CD8-positive, alpha-beta T cell (primary cell): ENCODE measurements at regions of chr6 and their contacts with region 1.

Region 1: GRCh38 chr6:21593412-21593926 is at the start of gene SOX4:
- DNase-seq: peak in 8 of 9 experiments; percentile 40 to 90 (median 72)
- ATAC-seq: peak; percentile 71
- H3K4me3 ChIP-seq: peak within 1 kb of the TSS; percentile 62 to 66
- H3K4me3 Mint-ChIP-seq: no peak within 1 kb of the TSS
- H3K27ac ChIP-seq: peak within 1 kb of the TSS; percentile 19 to 33
- H3K27ac Mint-ChIP-seq: peak within 1 kb of the TSS; percentile 78
- H3K4me1 ChIP-seq: peaks cover 28% of the 10 kb centered on the region
- H3K4me1 Mint-ChIP-seq: peaks cover 25% of the 10 kb centered on the region
- H3K27me3 ChIP-seq: peaks cover under 1 to 23% of the 10 kb centered on the region in 2 experiments
- H3K27me3 Mint-ChIP-seq: peaks cover 15% of the 10 kb centered on the region
- CTCF ChIP-seq: no peak
- total RNA-seq, gene SOX4: 20.2 to 20.4 TPM

Region 2: DNA sequence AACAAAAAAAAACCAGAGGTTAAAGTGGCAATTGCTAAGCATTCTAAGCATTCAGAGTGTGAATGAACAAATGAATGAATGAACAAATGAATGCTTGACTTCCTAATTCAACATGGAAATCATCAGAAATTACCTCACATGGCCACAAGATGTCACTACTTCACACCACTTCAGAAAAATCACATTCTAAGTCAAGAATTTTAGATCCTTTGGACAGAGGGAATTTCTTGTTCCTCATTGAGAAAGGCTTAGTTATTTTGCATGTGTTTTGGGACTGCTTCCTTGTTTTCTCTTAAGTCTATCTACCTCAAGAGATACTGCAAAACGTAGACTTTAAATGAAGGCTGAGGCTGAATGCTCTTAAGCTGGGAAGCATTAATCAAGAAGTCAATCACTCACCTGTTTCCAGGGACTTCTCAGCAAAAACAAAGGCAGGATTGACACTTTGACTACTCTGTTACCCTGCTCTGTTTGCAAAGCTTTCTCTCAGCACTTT is 1501.3 kb before region 1 on chr6:
- CTCF ChIA-PET with region 1: interaction called, 4 read pairs
- POLR2A ChIA-PET with region 1: no interaction called
- intact Hi-C with region 1: loop called in 1 of 2 experiments (anchors 5 kb)
- DNase-seq: peak in 2 of 9 experiments; percentile 32 to 48
- ATAC-seq: no peak
- H3K4me3 ChIP-seq: no peak overlapping the region
- H3K4me3 Mint-ChIP-seq: no peak overlapping the region
- H3K27ac ChIP-seq: no peak overlapping the region
- H3K27ac Mint-ChIP-seq: no peak overlapping the region
- H3K4me1 ChIP-seq: no peaks in the 10 kb centered on the region
- H3K4me1 Mint-ChIP-seq: no peaks in the 10 kb centered on the region
- H3K27me3 ChIP-seq: no peaks in the 10 kb centered on the region
- H3K27me3 Mint-ChIP-seq: no peaks in the 10 kb centered on the region
- CTCF ChIP-seq: peak; percentile 45

Region 3: DNA sequence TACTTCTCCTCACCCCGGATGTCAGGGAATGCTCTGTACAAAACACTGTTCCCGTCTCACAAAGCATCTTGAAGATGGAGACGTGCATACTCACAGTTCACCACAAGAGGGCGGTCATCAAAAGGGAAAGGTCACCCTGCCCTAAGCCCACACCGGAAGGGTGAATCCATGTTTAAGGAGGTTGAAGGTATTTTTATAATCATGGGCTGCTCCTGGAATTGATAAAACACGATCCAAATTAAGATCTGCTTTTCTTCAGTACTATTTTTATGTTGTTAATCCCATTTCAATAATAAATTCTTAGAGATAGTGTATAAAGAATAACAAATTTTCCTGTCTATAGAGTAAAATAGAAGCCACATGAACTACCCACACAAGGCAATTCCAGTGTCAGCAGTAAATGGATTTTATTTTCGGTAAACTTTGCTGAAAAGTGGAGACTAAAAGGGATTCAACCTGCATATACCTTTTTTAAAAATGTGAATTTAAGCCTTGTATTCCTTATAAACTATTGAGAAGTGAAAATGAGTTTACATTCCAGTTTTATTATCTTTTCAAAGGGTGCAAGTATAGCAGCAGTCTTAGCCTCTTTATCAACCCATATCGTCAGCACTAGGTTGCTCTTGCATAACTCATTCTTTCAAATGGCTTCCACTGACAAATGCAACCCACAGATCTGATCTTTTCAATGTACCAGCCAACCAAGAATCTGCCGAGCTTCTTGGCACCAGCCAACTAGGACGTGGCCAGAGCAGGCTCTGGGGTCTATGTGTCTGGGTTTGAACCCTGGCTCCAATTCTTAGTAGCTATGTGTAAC is 1301.5 kb before region 1 on chr6:
- CTCF ChIA-PET with region 1: no interaction called
- POLR2A ChIA-PET with region 1: no interaction called
- intact Hi-C with region 1: loop called in 1 of 2 experiments (anchors 10 kb)
- DNase-seq: peak; percentile 34 to 86 (median 77)
- ATAC-seq: peak; percentile 95
- H3K4me3 ChIP-seq: no peak overlapping the region
- H3K4me3 Mint-ChIP-seq: peak overlapping the region; percentile 26
- H3K27ac ChIP-seq: no peak overlapping the region
- H3K27ac Mint-ChIP-seq: peak overlapping the region; percentile 43
- H3K4me1 ChIP-seq: peaks cover 13% of the 10 kb centered on the region
- H3K4me1 Mint-ChIP-seq: peaks cover 24% of the 10 kb centered on the region
- H3K27me3 ChIP-seq: no peaks in the 10 kb centered on the region
- H3K27me3 Mint-ChIP-seq: no peaks in the 10 kb centered on the region
- CTCF ChIP-seq: peak; percentile 95

Region 4: DNA sequence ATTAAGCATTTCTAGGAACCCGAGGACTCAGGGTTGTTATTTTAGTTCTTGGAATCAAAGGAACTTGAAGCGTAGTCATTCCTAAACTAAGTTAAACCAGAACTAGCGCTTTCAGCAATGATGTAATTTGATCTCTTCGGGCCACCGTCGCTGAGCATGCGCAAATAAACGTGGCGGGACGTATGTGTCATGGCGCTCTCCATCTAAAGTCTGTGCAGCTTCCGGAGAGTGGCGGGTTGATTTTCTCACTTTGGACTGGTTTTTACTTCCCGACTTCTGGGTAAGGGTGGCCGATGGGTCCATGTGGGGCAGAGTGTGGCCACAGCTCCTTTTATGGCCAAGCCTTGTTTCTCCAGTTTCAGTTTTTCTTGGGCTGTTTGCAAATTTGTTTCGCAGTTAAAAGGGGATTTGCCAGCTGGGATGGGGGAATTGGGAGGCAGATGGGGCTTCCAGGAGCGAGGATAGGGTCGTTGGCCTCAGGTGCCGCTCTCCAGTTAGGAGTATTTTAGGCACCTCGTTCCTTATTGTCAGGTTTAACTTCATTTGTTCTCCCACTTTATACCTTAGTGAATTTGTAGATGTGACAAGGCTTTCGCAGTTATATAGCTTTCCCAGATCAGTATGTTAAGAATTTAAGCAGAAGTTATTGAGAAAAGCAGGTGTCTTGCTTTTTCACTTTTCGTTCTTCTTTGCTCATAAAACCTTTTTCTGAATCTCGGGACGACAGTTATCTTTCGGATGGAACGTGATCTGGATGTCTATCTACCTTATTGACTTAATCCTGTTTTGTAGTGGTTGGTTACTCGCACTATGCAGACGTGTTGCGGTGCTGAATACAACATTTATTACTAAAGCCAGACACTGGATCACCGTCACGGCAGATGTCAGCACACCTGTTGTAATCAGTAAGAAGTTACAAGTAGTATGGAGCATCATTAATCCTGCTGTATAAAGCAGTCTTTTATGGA is 1058.9 kb before region 1 on chr6 and contains the start of gene CDKAL1:
- CTCF ChIA-PET with region 1: interaction called, 6 read pairs
- POLR2A ChIA-PET with region 1: interaction called, 3 read pairs
- intact Hi-C with region 1: loop called in 1 of 2 experiments (anchors 10 kb)
- DNase-seq: peak; percentile 73 to 94 (median 89)
- ATAC-seq: peak; percentile 88
- H3K4me3 ChIP-seq: peak within 1 kb of the TSS; percentile 65 to 74
- H3K4me3 Mint-ChIP-seq: peak within 1 kb of the TSS; percentile 97
- H3K27ac ChIP-seq: peak within 1 kb of the TSS; percentile 71 to 88
- H3K27ac Mint-ChIP-seq: peak within 1 kb of the TSS; percentile 99
- H3K4me1 ChIP-seq: peaks cover 13% of the 10 kb centered on the region
- H3K4me1 Mint-ChIP-seq: peaks cover 46% of the 10 kb centered on the region
- H3K27me3 ChIP-seq: no peaks in the 10 kb centered on the region
- H3K27me3 Mint-ChIP-seq: peaks cover 2% of the 10 kb centered on the region
- CTCF ChIP-seq: no peak
- total RNA-seq, gene CDKAL1: 21.2 to 22.4 TPM

Region 5: DNA sequence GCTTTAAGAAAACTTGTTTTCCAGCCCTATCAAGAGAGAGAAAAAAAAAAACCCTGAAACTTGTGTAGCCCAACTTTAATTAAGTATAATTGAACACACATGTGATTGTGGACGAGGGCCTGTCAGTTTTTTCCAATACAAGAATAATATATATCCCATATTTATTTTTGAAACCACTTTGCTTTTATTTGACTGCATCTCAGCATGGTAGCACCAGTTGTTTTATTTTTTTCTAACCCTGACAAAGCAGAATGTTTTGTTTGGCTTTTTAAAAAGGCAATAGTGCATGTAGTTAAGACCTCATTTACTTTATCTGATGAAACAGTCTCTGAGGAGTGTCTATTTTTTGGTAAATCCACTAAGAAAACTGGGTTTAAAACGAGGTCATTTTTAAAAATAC is 801.5 kb before region 1 on chr6:
- CTCF ChIA-PET with region 1: interaction called, 4 read pairs
- POLR2A ChIA-PET with region 1: no interaction called
- intact Hi-C with region 1: loop called in 1 of 2 experiments (anchors 5 kb)
- DNase-seq: no peak
- ATAC-seq: no peak
- H3K4me3 ChIP-seq: no peak overlapping the region
- H3K4me3 Mint-ChIP-seq: no peak overlapping the region
- H3K27ac ChIP-seq: no peak overlapping the region
- H3K27ac Mint-ChIP-seq: no peak overlapping the region
- H3K4me1 ChIP-seq: no peaks in the 10 kb centered on the region
- H3K4me1 Mint-ChIP-seq: no peaks in the 10 kb centered on the region
- H3K27me3 ChIP-seq: no peaks in the 10 kb centered on the region
- H3K27me3 Mint-ChIP-seq: no peaks in the 10 kb centered on the region
- CTCF ChIP-seq: no peak

Region 6: GRCh38 chr6:22145823-22146677 is 552.6 kb after region 1 on chr6:
- CTCF ChIA-PET with region 1: no interaction called
- POLR2A ChIA-PET with region 1: interaction called, 3 read pairs
- intact Hi-C with region 1: loop called (anchors 2 to 5 kb)
- DNase-seq: peak in 4 of 9 experiments; percentile 5 to 53 (median 30)
- ATAC-seq: peak; percentile 12
- H3K4me3 ChIP-seq: peak overlapping the region; percentile 28 to 57
- H3K4me3 Mint-ChIP-seq: peak overlapping the region; percentile 81
- H3K27ac ChIP-seq: no peak overlapping the region
- H3K27ac Mint-ChIP-seq: peak overlapping the region; percentile 76
- H3K4me1 ChIP-seq: peaks cover 24% of the 10 kb centered on the region
- H3K4me1 Mint-ChIP-seq: peaks cover 41% of the 10 kb centered on the region
- H3K27me3 ChIP-seq: no peaks in the 10 kb centered on the region
- H3K27me3 Mint-ChIP-seq: peaks cover 25% of the 10 kb centered on the region
- CTCF ChIP-seq: no peak